ENCODE measurements at regions of chr15 and their contacts with region 1.

Region 1: DNA sequence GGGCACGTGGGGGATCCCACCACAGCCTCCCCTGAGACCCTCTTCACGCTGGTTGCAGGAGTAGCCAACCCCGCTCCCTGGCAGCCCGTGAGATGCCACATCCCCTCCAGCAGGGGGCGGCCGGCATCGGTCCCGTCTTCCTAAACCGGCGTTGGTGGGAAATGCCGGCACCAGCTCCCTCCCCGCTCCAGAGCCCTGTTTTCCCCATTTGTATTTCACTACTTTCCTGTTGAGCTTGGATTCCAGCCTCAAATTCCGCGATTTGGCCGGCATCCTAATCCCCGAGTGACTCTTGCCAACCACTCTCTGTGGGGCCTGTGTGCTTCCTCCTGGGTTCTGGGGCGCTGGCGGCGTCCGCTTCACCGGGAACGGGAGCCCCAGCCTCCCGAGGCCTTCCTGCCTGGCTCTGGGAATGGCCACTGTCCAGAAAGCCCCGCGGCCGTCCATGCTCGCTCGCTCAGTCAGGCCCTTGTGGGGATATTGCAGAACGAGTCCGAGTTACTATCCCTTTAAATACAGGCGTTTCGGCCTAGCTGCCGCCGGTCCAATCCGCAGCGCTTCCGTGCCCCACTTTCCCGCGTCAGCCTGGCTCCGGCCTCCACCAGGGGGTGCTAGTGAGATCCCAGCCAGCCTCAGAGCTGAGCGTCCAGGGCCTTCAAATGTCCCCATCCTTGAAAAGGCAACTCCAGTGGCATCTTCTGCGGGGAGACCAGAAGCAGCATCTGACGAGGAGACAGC is 8.1 kb upstream of the ADAMTS17 start:
- DNase-seq: peak; percentile 65 to 91 (median 85)
- ATAC-seq: peak; percentile 92
- H3K4me3 ChIP-seq: peak overlapping the region; percentile 88 to 99
- H3K4me3 Mint-ChIP-seq: peak overlapping the region; percentile 94
- H3K27ac ChIP-seq: peak overlapping the region; percentile 54 to 80
- H3K27ac Mint-ChIP-seq: peak overlapping the region; percentile 87
- H3K4me1 ChIP-seq: peaks cover 9% of the 10 kb centered on the region
- H3K4me1 Mint-ChIP-seq: peaks cover 9% of the 10 kb centered on the region
- H3K27me3 ChIP-seq: no peaks in the 10 kb centered on the region
- H3K27me3 Mint-ChIP-seq: peaks cover 20% of the 10 kb centered on the region
- CTCF ChIP-seq: peak; percentile 78

Region 2: DNA sequence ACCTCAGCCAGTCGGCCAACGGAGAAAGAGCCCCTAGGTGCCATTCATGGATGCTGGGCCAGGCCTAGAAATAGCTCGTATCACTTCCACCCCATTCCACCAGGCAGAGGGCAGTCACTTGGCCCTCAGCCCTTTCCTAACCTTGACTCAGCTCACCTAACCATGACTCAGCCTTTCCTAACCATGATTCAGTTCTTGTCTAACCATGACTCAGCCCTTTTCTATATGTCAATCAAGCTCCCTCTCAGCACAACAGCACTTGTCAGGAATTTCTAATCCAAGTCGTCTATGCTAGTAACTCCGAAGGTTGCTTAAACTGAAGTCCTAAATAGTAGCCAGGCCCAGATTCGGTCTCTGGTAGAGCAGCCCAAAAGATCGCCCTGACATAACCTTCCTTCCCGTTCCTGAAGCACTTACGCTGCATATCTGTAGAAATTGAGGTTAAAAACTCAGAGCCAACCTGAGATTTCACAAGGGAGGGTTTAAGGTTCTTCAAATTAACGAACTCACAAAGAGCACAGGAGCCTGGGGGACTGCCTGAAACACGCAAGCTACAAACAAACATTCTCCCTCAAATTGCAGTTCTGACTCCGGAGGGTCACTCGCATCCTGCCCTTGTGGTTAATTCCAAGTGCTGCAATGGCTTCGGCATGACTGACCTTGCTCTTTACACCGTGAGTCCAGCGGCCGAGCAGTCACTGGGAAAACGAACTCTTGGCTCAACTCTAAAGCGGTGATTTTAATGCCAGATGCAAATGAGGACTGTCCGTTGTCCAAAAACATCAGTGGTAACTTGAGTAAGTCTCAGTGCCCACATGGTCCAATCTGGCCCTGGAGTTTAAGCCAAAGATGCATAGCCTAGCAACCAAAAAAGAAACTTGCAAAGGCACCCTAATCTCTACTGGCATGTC is 108.0 kb before region 1 on chr15:
- CTCF ChIA-PET with region 1: no interaction called
- POLR2A ChIA-PET with region 1: no interaction called
- intact Hi-C with region 1: no loop called
- DNase-seq: no peak
- ATAC-seq: no peak
- H3K4me3 ChIP-seq: no peak overlapping the region
- H3K4me3 Mint-ChIP-seq: no peak overlapping the region
- H3K27ac ChIP-seq: no peak overlapping the region
- H3K27ac Mint-ChIP-seq: no peak overlapping the region
- H3K4me1 ChIP-seq: no peaks in the 10 kb centered on the region
- H3K4me1 Mint-ChIP-seq: no peaks in the 10 kb centered on the region
- H3K27me3 ChIP-seq: no peaks in the 10 kb centered on the region
- H3K27me3 Mint-ChIP-seq: peaks cover 2% of the 10 kb centered on the region
- CTCF ChIP-seq: no peak

Region 3: GRCh38 chr15:100330629-100331215 is 19.1 kb before region 1 on chr15:
- CTCF ChIA-PET with region 1: interaction called, 139 read pairs
- POLR2A ChIA-PET with region 1: interaction called, 10 read pairs
- intact Hi-C with region 1: no loop called
- DNase-seq: peak in 7 of 9 experiments; percentile 36 to 82 (median 61)
- ATAC-seq: peak; percentile 88
- H3K4me3 ChIP-seq: peak overlapping the region; percentile 30 to 41
- H3K4me3 Mint-ChIP-seq: peak overlapping the region; percentile 61
- H3K27ac ChIP-seq: peak overlapping the region in 1 of 2 experiments; percentile 52
- H3K27ac Mint-ChIP-seq: peak overlapping the region; percentile 76
- H3K4me1 ChIP-seq: peaks cover 71% of the 10 kb centered on the region
- H3K4me1 Mint-ChIP-seq: peaks cover 81% of the 10 kb centered on the region
- H3K27me3 ChIP-seq: no peaks in the 10 kb centered on the region
- H3K27me3 Mint-ChIP-seq: peaks cover 2% of the 10 kb centered on the region
- CTCF ChIP-seq: no peak

Region 4: GRCh38 chr15:100572362-100572983 is 222.6 kb after region 1 on chr15:
- CTCF ChIA-PET with region 1: interaction called, 114 read pairs
- POLR2A ChIA-PET with region 1: interaction called, 7 read pairs
- intact Hi-C with region 1: loop called (anchors 1 to 2 kb)
- DNase-seq: peak in 2 of 9 experiments; percentile 26 to 51
- ATAC-seq: peak; percentile 58
- H3K4me3 ChIP-seq: no peak overlapping the region
- H3K4me3 Mint-ChIP-seq: peak overlapping the region; percentile 64
- H3K27ac ChIP-seq: peak overlapping the region in 1 of 2 experiments; percentile 6
- H3K27ac Mint-ChIP-seq: peak overlapping the region; percentile 93
- H3K4me1 ChIP-seq: peaks cover 26% of the 10 kb centered on the region
- H3K4me1 Mint-ChIP-seq: peaks cover 56% of the 10 kb centered on the region
- H3K27me3 ChIP-seq: no peaks in the 10 kb centered on the region
- H3K27me3 Mint-ChIP-seq: no peaks in the 10 kb centered on the region
- CTCF ChIP-seq: peak; percentile 80

Region 5: DNA sequence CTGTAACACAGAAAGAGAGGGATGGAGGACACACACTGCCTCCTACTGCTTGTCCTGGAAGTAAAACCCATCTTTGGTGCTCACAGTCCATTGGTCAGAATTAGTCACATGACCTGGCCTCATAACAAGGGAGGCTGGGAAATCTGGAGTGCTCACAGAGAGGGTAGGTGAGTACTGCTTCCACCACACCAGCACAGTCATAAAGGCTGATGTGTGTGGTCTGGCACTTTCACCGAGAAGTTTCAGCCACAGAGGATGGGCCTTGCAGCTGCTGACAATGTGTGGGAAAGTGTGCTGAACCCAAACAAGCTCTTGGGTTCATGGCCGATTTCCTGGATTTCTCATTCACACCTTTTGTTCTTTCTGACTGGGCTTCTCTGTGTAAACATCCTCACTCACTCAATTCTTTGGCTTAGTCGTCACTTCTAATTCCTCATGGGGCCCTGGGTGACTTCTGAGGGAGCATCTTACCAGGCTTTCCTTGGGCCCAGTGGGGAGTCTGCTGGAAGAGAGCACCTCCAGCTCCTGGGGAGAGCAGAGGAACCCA is 353.2 kb after region 1 on chr15:
- CTCF ChIA-PET with region 1: no interaction called
- POLR2A ChIA-PET with region 1: no interaction called
- intact Hi-C with region 1: no loop called
- DNase-seq: no peak
- ATAC-seq: no peak
- H3K4me3 ChIP-seq: no peak overlapping the region
- H3K4me3 Mint-ChIP-seq: no peak overlapping the region
- H3K27ac ChIP-seq: no peak overlapping the region
- H3K27ac Mint-ChIP-seq: no peak overlapping the region
- H3K4me1 ChIP-seq: no peaks in the 10 kb centered on the region
- H3K4me1 Mint-ChIP-seq: no peaks in the 10 kb centered on the region
- H3K27me3 ChIP-seq: no peaks in the 10 kb centered on the region
- H3K27me3 Mint-ChIP-seq: peaks cover 24% of the 10 kb centered on the region
- CTCF ChIP-seq: no peak

Region 6: DNA sequence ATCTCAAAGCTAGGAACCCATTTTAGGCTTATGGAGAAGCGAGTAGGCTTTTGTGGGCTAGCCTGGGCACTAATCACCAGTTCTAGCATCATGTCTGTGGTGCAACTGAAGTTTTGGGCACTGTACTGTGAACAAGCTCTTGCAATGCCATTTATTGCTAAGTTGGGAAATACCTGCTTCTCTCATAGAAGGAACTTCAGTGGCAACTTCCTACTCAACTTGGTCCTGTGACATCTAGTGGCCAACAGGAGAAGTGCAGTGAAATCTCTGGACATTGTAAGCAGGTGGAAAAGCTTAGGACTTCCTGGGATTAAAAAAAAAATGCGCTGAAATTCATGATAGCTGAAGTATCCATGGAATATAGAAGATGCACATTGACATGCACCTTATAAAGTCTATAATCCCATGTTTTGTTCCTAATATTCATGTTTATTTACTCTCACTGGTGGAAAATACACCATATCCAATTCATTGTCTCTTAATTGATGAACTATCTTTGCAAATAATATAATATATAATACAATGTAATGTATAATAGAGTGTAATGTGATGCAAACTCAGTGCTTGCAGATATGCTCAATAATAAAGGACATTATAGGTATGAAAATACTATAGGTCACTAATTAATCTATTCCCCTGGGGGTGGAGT is 523.3 kb after region 1 on chr15:
- CTCF ChIA-PET with region 1: interaction called, 7 read pairs
- POLR2A ChIA-PET with region 1: no interaction called
- intact Hi-C with region 1: loop called (anchors 2 to 10 kb)
- DNase-seq: peak in 7 of 9 experiments; percentile 25 to 74 (median 51)
- ATAC-seq: peak; percentile 70
- H3K4me3 ChIP-seq: no peak overlapping the region
- H3K4me3 Mint-ChIP-seq: no peak overlapping the region
- H3K27ac ChIP-seq: no peak overlapping the region
- H3K27ac Mint-ChIP-seq: no peak overlapping the region
- H3K4me1 ChIP-seq: no peaks in the 10 kb centered on the region
- H3K4me1 Mint-ChIP-seq: no peaks in the 10 kb centered on the region
- H3K27me3 ChIP-seq: no peaks in the 10 kb centered on the region
- H3K27me3 Mint-ChIP-seq: peaks cover 27% of the 10 kb centered on the region
- CTCF ChIP-seq: peak; percentile 73

Region 7: DNA sequence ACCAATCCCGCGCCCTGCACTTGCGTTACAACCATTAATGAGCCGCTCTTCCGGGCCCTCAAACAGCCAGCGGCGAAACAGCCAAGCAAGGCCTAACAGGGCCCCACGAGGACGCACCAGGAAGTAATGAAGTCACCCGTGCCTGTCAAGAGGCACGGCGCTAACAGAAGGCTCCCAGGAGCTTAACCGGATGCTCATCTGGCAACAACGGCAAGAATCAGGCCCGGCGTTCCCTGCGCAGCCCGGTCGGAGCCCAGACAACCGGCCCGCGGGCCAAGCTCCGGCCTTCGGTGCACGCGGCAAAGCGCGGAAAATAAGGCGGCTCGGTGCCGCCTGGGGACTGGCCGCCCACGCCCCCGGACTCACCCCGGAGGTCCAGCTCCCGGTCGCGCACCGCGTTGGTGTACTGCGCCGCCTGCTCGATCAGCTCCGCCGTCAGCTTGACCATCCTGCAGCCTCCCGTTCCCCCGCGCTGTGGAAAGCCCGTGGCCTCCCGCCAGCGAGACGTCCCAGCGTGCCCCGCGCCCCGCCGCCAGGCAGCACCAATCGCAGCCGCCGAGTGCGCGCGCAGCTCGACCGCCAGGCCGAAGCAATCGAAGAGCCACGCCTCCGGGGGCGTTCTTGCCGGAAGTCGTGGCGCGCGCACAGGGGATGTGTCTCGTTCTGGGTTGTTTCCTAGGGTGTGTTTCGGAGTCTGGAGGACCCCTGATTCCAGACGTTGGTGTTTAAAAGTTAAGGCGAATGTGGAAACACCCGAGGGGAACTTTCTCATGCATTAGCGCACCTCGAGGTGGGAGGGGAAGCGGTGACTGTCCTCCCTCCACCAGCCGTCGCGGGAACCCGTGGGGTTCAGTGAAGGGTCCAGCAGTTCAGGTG is 945.1 kb after region 1 on chr15 and contains the start of gene SNRPA1:
- CTCF ChIA-PET with region 1: no interaction called
- POLR2A ChIA-PET with region 1: no interaction called
- intact Hi-C with region 1: loop called in 1 of 2 experiments (anchors 10 kb)
- DNase-seq: peak; percentile 94 to 98 (median 98)
- ATAC-seq: peak; percentile 80
- H3K4me3 ChIP-seq: peak within 1 kb of the TSS; percentile 68 to 97
- H3K4me3 Mint-ChIP-seq: peak within 1 kb of the TSS; percentile 94
- H3K27ac ChIP-seq: peak within 1 kb of the TSS; percentile 95 to 98
- H3K27ac Mint-ChIP-seq: peak within 1 kb of the TSS; percentile 96
- H3K4me1 ChIP-seq: peaks cover 38% of the 10 kb centered on the region
- H3K4me1 Mint-ChIP-seq: peaks cover 53% of the 10 kb centered on the region
- H3K27me3 ChIP-seq: no peaks in the 10 kb centered on the region
- H3K27me3 Mint-ChIP-seq: no peaks in the 10 kb centered on the region
- CTCF ChIP-seq: no peak
- total RNA-seq, gene SNRPA1: 228 to 247 TPM